ENCODE measurements at regions of chr1 and their contacts with region 1.

Region 1: DNA sequence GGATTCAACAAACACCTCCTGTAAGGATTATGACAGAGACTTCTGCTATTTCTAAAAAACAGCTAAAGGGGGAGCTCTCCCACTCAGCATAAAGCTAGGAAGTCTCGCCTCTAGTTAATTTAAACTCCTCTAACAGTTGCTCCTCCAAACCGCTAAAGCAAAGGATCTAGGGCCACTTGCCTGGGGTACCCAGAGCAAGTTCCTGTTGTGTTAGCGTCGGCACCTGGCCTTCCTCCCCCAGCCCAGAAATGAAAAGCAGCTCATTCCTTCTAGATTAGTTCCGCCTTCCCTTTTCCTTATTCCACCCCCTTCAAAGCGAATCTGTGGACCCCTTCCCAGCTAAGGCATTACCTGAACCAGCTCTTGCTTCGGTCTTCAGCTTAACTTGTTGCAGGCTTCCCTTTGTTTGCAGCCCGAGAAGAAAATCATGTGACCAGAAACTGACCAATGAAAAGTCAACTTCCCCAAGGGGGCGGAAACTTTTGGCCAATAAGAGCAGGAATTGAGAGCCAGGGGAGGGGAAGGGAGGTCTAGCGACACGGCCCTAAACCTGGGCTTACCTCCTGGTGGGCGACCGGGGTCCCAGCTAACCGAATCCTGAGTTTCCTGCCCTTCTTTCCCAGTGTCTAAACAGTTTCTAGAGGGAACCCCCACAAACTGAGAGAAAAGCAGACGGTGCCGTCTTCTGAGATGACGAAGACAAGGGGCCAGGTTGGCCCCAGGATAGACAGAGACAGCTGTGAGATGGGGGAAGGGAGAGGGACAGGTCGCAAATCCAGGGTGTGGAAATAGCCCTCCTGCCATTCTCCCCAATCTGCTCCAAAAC is at the start of gene PBXIP1:
- DNase-seq: peak; percentile 98
- H3K4me3 ChIP-seq: peak within 1 kb of the TSS; percentile 19 to 76 (median 57)
- H3K27ac ChIP-seq: peak within 1 kb of the TSS; percentile 69
- H3K4me1 ChIP-seq: peaks cover 26% of the 10 kb centered on the region
- H3K27me3 ChIP-seq: no peaks in the 10 kb centered on the region
- CTCF ChIP-seq: peak; percentile 12 to 33
- POLR2A ChIP-seq: no peak
- total RNA-seq, gene PBXIP1: 49.0 and 49.4 TPM in 2 replicates

Region 2: GRCh38 chr1:154896771-154897391 is 59.0 kb before region 1 on chr1:
- CTCF ChIA-PET with region 1: no interaction called
- POLR2A ChIA-PET with region 1: no interaction called
- dilution Hi-C with region 1: no loop called
- intact Hi-C with region 1: no loop called
- DNase-seq: no peak
- H3K4me3 ChIP-seq: no peak overlapping the region
- H3K27ac ChIP-seq: no peak overlapping the region
- H3K4me1 ChIP-seq: no peaks in the 10 kb centered on the region
- H3K27me3 ChIP-seq: peaks cover 3 to 14% of the 10 kb centered on the region in 2 experiments
- CTCF ChIP-seq: no peak
- POLR2A ChIP-seq: no peak

Region 3: GRCh38 chr1:154936555-154937084 is 19.3 kb before region 1 on chr1 and contains the start of gene PMVK:
- CTCF ChIA-PET with region 1: interaction called, 6 read pairs
- POLR2A ChIA-PET with region 1: interaction called, 5 read pairs
- dilution Hi-C with region 1: no loop called
- intact Hi-C with region 1: loop called (anchors 2 kb)
- DNase-seq: peak; percentile 94
- H3K4me3 ChIP-seq: peak within 1 kb of the TSS; percentile 26 to 79 (median 55)
- H3K27ac ChIP-seq: peak within 1 kb of the TSS; percentile 92
- H3K4me1 ChIP-seq: peaks cover 8% of the 10 kb centered on the region
- H3K27me3 ChIP-seq: no peaks in the 10 kb centered on the region
- CTCF ChIP-seq: peak in 1 of 2 donors; percentile 36
- POLR2A ChIP-seq: peak; percentile 73
- total RNA-seq, gene PMVK: 22.6 and 23.0 TPM in 2 replicates

Region 4: DNA sequence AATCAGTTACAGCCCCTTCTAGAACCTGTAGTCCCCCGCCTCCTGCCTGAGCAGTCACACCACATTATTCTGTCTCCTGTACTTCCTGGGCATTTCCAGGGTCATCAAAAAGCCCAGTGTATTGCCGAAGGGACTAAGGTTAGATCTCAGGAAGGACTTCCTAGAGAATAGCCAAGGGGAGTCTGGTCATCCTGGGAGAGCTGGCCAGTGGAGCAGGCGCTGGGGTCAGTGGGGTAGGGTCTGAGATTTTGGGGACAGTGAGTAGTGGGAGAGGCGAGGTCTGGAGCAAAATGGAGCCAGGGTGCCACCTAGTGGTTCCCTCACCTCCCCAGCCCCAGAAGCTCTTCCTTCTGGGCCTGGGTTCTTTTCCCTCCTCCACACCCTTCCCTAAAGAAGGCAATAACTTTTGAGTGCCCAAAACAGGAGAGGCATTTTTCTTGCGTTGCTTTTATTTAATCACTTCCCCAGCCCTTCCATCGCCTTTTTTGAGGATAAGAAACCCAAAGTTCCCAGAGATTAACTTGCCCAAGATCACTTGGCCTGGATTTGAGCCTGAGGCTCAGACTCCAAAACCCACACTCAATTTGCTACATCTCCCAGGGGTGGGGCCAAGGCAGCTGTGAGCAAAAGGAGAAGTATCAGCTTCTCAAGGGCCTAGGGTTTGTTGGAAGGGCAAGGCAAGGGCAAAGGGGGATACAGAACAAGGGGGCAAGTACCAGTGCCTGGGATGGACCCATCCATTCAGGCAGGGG is 12.1 kb before region 1 on chr1:
- CTCF ChIA-PET with region 1: interaction called, 10 read pairs
- POLR2A ChIA-PET with region 1: no interaction called
- dilution Hi-C with region 1: no loop called
- intact Hi-C with region 1: no loop called
- DNase-seq: peak; percentile 29
- H3K4me3 ChIP-seq: no peak overlapping the region
- H3K27ac ChIP-seq: no peak overlapping the region
- H3K4me1 ChIP-seq: no peaks in the 10 kb centered on the region
- H3K27me3 ChIP-seq: no peaks in the 10 kb centered on the region
- CTCF ChIP-seq: peak; percentile 69 to 85
- POLR2A ChIP-seq: no peak

Region 5: DNA sequence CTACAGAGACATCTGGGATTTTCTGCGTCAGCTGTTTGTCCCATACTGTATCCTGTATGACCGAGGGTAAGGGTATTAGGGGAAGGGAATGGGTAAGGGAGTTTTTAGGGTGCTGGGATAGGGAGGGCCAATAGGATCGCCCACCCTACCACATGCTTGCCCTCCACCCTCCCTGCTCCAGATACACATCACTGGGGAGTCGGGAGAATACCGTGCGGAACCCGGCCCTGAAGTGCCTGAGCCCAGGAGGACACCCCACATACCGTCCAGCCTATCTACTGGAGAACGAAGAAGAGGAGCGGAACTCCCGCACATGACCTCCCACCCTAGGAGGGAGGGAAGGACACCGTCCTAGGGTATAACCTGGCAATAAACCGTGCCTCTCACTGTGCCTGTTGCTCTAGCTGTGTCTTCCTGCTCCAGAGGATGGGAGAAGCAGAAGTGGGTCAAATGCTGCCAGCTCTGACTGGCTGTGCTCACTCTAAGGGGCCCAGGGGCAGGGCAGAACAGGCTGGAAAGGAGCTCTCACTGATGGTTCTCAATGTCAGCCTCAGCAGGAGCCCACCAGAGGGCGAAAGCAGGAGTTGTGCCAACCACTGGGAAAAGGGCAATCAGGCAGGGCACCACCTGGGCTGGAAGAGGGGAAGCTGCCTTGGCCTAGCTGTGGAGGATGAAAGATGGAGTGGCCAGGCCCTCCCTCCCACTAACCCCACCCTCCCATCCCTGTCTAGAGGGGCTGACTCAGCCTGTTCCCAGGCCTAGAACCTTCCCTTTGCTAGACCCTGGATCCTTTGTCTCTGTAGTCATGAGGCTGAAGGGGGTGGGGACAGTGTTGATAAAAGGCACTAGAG is 37.0 kb after region 1 on chr1:
- CTCF ChIA-PET with region 1: interaction called, 48 read pairs
- POLR2A ChIA-PET with region 1: no interaction called
- dilution Hi-C with region 1: no loop called
- intact Hi-C with region 1: no loop called
- DNase-seq: no peak
- H3K4me3 ChIP-seq: no peak overlapping the region
- H3K27ac ChIP-seq: no peak overlapping the region
- H3K4me1 ChIP-seq: peaks cover 2% of the 10 kb centered on the region
- H3K27me3 ChIP-seq: no peaks in the 10 kb centered on the region
- CTCF ChIP-seq: peak in 1 of 2 donors; percentile 40
- POLR2A ChIP-seq: no peak

Region 6: DNA sequence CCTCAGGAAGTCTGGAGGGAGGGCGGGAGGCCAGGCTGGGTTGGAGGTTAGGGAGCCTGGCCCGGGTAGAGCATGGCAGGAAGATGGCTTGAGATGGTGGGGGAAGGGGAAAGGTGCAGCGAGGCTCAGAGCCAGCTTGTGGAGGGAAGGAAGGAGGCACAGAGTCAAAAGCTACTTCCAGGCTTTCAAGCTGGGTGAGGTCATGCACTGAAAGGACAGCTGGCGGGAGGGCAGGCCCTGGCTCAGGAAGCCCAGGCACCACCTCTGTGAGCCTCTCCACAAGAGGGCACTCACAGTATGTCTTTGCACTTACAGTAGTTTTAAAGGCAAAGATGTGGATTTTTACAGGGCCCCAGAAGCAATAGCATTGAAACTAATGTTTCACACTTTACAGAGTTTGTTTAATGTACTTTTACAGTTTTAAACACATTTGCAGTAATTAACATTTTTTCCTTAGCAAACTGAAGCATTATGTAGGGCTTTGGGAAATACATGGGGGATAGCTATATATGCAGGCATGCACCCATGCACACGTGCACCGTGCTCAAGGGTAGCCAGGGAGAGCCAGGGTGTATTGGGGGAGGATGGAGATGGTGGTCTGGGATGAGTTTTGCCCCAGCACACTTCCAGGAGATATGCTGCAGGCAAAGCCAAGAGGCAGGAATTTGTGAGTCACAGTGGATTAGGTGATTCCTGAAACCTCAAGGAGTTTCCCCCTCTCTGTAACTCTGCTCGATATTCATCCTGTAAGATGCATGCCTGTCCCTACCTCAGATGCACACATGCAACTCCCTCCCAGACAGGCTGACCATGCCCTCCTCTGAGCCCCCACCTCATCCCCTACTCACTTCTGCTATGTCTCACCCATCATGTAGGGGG is 89.1 kb after region 1 on chr1:
- CTCF ChIA-PET with region 1: interaction called, 13 read pairs
- POLR2A ChIA-PET with region 1: no interaction called
- dilution Hi-C with region 1: no loop called
- intact Hi-C with region 1: loop called (anchors 2 kb)
- DNase-seq: peak; percentile 79
- H3K4me3 ChIP-seq: no peak overlapping the region
- H3K27ac ChIP-seq: no peak overlapping the region
- H3K4me1 ChIP-seq: peaks cover 18% of the 10 kb centered on the region
- H3K27me3 ChIP-seq: no peaks in the 10 kb centered on the region
- CTCF ChIP-seq: peak; percentile 79 to 89
- POLR2A ChIP-seq: no peak

Region 7: DNA sequence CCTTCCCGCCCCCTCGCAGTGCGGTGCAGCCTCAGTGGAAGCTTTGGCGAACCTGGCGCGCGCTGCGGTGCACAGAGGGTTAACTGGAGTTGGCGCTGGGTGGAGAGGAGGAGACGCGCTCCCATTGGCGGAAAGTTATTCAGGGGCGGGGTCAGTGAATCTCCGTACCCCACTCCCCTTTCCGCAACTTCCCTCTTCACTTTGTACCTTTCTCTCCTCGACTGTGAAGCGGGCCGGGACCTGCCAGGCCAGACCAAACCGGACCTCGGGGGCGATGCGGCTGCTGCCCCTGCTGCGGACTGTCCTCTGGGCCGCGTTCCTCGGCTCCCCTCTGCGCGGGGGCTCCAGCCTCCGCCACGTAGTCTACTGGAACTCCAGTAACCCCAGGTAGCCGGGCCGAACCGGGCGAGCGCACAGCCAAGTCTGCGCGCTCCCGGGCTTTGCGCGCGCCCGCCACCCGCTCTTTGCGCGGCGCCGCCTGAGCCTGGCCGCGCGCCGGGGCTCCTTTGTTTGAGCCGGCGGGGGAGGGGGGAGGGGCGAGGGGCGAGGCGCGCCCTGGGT is 107.7 kb after region 1 on chr1 and contains the start of gene EFNA4:
- CTCF ChIA-PET with region 1: interaction called, 11 read pairs
- POLR2A ChIA-PET with region 1: no interaction called
- dilution Hi-C with region 1: no loop called
- intact Hi-C with region 1: no loop called
- DNase-seq: peak; percentile 89
- H3K4me3 ChIP-seq: peak within 1 kb of the TSS; percentile 66 to 98 (median 85)
- H3K27ac ChIP-seq: peak within 1 kb of the TSS; percentile 36
- H3K4me1 ChIP-seq: peaks cover 10% of the 10 kb centered on the region
- H3K27me3 ChIP-seq: no peaks in the 10 kb centered on the region
- CTCF ChIP-seq: no peak
- POLR2A ChIP-seq: peak; percentile 89
- total RNA-seq, gene EFNA4: 16.5 and 17.5 TPM in 2 replicates

Region 8: DNA sequence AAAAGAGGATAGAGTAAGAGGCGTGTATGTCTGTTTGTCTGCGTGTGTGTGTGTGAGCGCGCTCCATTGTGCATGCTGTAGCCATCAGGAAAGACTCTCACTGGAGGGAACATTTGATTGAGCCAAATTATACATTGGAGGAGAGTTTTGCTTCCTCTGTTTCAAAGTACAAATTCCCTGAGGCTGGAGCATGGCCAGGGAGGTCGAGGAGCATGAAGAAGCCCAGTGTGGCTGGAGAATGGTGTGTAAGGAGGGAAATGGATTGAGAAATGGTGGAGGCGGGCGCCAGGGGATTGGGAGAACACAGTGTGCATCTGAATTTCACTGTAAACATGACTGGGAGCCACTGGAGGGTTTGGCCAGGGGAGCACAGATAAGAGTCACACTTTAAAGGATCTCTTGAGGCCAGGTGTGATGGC is 149.7 kb after region 1 on chr1:
- CTCF ChIA-PET with region 1: no interaction called
- POLR2A ChIA-PET with region 1: no interaction called
- dilution Hi-C with region 1: no loop called
- intact Hi-C with region 1: no loop called
- DNase-seq: peak; percentile 88
- H3K4me3 ChIP-seq: no peak overlapping the region
- H3K27ac ChIP-seq: no peak overlapping the region
- H3K4me1 ChIP-seq: peaks cover 3% of the 10 kb centered on the region
- H3K27me3 ChIP-seq: peaks cover 6 to 9% of the 10 kb centered on the region in 2 experiments
- CTCF ChIP-seq: no peak
- POLR2A ChIP-seq: no peak